Panc1 (cell line): ENCODE measurements at regions of chr6 and their contacts with region 1.

Region 1: DNA sequence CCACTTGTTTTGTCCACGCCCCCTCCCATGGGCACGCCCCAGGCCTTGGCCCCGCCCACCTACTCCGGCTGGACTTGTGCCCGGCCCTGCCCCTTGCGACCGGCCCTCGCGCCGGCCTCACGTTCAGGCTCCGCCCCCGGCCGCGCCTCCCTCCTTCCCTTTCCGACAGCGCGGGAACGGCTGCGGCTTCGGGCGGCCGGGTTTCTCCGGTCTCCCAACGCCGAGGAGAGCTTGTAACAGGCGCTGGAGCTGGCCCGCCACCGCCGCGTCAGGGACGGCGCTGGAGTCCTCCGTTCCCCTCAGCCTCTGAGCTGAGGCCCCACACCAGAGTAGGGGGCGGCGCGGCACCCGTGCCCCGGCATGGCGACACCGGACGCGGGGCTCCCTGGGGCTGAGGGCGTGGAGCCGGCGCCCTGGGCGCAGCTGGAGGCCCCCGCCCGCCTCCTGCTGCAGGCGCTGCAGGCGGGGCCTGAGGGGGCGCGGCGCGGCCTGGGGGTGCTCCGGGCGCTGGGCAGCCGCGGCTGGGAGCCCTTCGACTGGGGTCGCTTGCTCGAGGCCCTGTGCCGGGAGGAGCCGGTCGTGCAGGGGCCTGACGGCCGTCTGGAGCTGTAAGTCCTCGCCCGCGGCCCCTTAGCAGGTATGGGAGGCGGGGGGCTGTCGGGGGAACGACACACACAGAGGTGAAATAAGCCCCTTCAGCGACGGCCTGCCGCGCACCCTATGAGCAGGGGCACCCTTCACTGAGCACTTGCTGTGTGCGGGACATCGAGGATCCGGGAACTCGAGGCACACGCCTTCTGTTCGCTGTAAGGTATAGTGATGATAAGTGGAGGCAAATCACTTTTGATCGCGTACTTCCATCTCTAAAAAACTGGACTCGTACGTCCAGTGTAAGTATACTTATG is at the start of gene FANCE:
- DNase-seq: no peak
- ATAC-seq: peak; percentile 93
- H3K4me3 ChIP-seq: peak within 1 kb of the TSS; percentile 62 to 65
- H3K27ac ChIP-seq: peak within 1 kb of the TSS; percentile 51; the same call in 1 of the 2 replicates
- H3K4me1 ChIP-seq: peaks cover 18% of the 10 kb centered on the region
- H3K27me3 ChIP-seq: no peaks in the 10 kb centered on the region
- CTCF ChIP-seq: no peak
- total RNA-seq, gene FANCE: 4.3 TPM

Region 2: GRCh38 chr6:35008853-35009252 is 443.6 kb before region 1 on chr6:
- CTCF ChIA-PET with region 1: interaction called, 10 read pairs
- POLR2A ChIA-PET with region 1: no interaction called
- in situ Hi-C with region 1: no loop called
- intact Hi-C with region 1: no loop called
- DNase-seq: no peak
- ATAC-seq: no peak
- H3K4me3 ChIP-seq: no peak overlapping the region
- H3K27ac ChIP-seq: no peak overlapping the region
- H3K4me1 ChIP-seq: no peaks in the 10 kb centered on the region
- H3K27me3 ChIP-seq: no peaks in the 10 kb centered on the region
- CTCF ChIP-seq: no peak

Region 3: DNA sequence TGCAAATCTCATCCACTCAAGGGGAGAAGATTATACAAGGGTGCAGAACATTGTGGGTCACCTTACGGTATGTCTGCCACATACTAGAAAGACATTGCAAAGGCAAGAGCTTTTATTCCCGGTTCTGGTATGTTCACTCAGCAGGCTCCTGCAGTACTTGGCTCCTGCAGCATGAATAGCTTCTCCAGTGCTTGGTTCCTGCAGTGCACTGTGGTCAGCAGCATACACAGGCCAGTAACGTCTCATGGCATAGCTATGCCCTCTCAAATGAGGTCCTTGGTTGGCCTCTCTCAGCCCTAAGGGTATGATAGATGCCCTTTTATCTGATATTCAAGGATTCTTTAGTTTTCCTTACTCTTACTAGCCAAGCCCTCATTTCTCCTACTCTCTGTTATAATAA is 323.9 kb before region 1 on chr6:
- CTCF ChIA-PET with region 1: no interaction called
- POLR2A ChIA-PET with region 1: no interaction called
- in situ Hi-C with region 1: no loop called
- intact Hi-C with region 1: no loop called
- DNase-seq: no peak
- ATAC-seq: no peak
- H3K4me3 ChIP-seq: no peak overlapping the region
- H3K27ac ChIP-seq: no peak overlapping the region
- H3K4me1 ChIP-seq: no peaks in the 10 kb centered on the region
- H3K27me3 ChIP-seq: no peaks in the 10 kb centered on the region; the same call in 1 of the 2 replicates
- CTCF ChIP-seq: no peak

Region 4: DNA sequence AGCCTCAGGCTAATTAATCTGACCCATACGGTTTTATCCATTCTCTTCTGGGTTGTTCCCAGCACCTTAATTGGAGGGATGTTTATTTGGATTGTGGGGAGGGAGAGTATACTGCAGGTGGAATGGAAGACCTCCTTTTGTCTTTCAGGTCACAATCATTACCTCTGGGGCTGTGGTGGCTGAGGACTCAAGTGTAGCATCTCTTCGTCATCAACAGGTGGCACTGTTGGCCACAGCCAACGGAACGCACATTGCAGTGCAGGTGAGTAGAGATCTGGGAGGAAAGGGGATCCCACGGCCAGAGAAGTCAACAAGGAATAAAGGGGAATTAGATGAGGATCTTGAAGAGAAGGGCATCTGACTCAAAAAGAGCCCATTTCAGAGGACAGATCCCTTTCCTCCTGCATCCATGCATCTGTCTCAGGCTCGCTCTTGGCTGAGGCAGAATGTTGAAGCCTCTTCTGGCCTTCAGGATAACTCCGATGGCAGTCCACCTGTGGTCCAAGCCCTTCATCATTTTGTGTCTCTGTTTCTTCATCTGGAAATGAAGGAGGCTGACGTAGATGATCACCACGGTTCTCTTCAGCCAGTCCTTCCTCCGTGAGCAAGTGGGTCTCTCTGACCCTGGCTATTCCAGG is 158.0 kb before region 1 on chr6:
- CTCF ChIA-PET with region 1: interaction called, 5 read pairs
- POLR2A ChIA-PET with region 1: no interaction called
- in situ Hi-C with region 1: no loop called
- intact Hi-C with region 1: loop called (anchors 1 kb)
- DNase-seq: no peak
- ATAC-seq: peak; percentile 77
- H3K4me3 ChIP-seq: no peak overlapping the region
- H3K27ac ChIP-seq: no peak overlapping the region
- H3K4me1 ChIP-seq: no peaks in the 10 kb centered on the region
- H3K27me3 ChIP-seq: no peaks in the 10 kb centered on the region
- CTCF ChIP-seq: peak; percentile 88

Region 5: DNA sequence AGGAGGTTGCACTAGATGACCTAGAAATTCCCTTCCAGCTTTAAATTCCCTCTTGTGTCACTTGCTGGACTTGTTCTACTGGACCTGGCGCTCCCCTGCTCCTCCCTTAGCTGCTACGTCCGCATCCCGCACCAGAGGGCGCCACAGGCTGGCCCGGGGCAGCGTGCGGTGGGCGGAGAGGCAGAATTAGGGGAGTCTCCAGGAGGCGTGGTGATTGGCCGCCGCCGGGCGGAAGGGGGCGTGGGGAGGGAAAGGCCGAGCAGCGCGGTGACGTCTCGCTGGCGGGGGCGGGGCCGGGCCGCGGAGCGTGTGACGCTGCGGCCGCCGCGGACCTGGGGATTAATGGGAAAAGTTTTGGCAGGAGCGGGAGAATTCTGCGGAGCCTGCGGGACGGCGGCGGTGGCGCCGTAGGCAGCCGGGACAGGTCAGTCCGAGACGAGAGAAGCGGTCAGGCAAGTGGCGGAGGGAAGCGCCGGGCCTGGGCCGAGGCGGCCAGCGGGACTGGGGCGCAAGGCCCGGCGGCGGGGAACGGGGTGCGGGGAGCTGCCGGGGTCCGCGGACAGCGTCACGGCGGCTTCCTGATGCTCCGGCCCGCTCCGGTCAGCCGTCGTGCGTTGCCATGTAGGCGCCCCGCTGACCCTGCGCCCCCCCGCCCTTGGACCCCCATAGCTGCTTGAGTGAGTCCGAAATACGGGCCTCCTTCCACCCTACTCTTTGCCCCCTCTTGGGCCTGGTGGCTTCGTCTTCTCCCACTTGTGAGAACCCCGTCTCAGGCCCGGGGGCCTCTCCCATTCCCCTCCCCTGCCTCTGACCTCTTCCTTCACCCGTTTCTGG is 110.0 kb before region 1 on chr6 and contains the start of gene PPARD:
- CTCF ChIA-PET with region 1: interaction called, 34 read pairs
- POLR2A ChIA-PET with region 1: no interaction called
- in situ Hi-C with region 1: no loop called
- intact Hi-C with region 1: loop called (anchors 1 kb)
- DNase-seq: peak; percentile 73
- ATAC-seq: peak; percentile 100
- H3K4me3 ChIP-seq: peak within 1 kb of the TSS; percentile 83 to 89
- H3K27ac ChIP-seq: peak within 1 kb of the TSS; percentile 93
- H3K4me1 ChIP-seq: peaks cover 10% of the 10 kb centered on the region
- H3K27me3 ChIP-seq: no peaks in the 10 kb centered on the region
- CTCF ChIP-seq: peak; percentile 98
- total RNA-seq, gene PPARD: 14.4 TPM

Region 6: GRCh38 chr6:35354361-35355135 is 97.9 kb before region 1 on chr6:
- CTCF ChIA-PET with region 1: interaction called, 3 read pairs
- POLR2A ChIA-PET with region 1: interaction called, 21 read pairs
- in situ Hi-C with region 1: no loop called
- intact Hi-C with region 1: no loop called
- DNase-seq: no peak
- ATAC-seq: no peak
- H3K4me3 ChIP-seq: no peak overlapping the region
- H3K27ac ChIP-seq: no peak overlapping the region
- H3K4me1 ChIP-seq: no peaks in the 10 kb centered on the region
- H3K27me3 ChIP-seq: no peaks in the 10 kb centered on the region
- CTCF ChIP-seq: no peak

Region 7: GRCh38 chr6:35544523-35545313 is 92.3 kb after region 1 on chr6:
- CTCF ChIA-PET with region 1: interaction called, 12 read pairs
- POLR2A ChIA-PET with region 1: no interaction called
- in situ Hi-C with region 1: no loop called
- intact Hi-C with region 1: no loop called
- DNase-seq: no peak
- ATAC-seq: no peak
- H3K4me3 ChIP-seq: no peak overlapping the region
- H3K27ac ChIP-seq: no peak overlapping the region
- H3K4me1 ChIP-seq: no peaks in the 10 kb centered on the region
- H3K27me3 ChIP-seq: no peaks in the 10 kb centered on the region
- CTCF ChIP-seq: no peak

Region 8: GRCh38 chr6:35634316-35634715 is 181.9 kb after region 1 on chr6:
- CTCF ChIA-PET with region 1: no interaction called
- POLR2A ChIA-PET with region 1: no interaction called
- in situ Hi-C with region 1: no loop called
- intact Hi-C with region 1: no loop called
- DNase-seq: no peak
- ATAC-seq: no peak
- H3K4me3 ChIP-seq: no peak overlapping the region
- H3K27ac ChIP-seq: no peak overlapping the region
- H3K4me1 ChIP-seq: no peaks in the 10 kb centered on the region
- H3K27me3 ChIP-seq: no peaks in the 10 kb centered on the region
- CTCF ChIP-seq: no peak

Region 9: DNA sequence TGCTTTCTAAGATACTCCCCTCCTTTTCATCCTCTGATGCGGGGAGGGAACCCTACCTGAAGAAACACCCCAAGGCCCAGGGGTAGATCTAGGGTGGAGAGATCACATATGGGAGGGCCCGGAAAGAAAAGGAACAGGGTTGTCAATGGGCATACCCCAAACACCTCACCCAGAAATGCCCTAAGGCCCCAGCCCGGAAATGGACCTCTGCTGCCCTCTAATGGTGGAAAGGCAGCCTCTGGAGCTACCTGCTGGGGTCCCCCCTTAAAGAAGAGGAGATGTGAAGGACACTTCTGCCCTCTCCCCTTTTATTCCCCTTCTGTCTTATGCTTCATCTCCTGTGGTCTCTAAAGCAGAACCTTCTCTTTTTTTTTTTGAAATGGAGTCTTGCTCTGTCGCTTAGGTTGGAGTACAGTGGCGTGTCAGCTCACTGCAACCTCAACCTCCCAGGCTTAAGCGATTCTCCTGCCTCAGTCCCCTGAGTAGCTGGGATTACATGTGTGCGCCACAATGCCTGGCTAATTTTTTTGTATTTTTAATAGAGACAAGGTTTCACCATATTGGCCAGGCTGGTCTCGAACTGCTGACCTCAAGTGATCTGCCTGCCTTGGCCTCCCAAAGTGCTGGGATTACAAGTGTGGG is 283.9 kb after region 1 on chr6:
- CTCF ChIA-PET with region 1: no interaction called
- POLR2A ChIA-PET with region 1: interaction called, 10 read pairs
- in situ Hi-C with region 1: no loop called
- intact Hi-C with region 1: no loop called
- DNase-seq: no peak
- ATAC-seq: peak; percentile 54
- H3K4me3 ChIP-seq: no peak overlapping the region
- H3K27ac ChIP-seq: no peak overlapping the region
- H3K4me1 ChIP-seq: peaks cover 5% of the 10 kb centered on the region; the same call in 1 of the 2 replicates
- H3K27me3 ChIP-seq: no peaks in the 10 kb centered on the region
- CTCF ChIP-seq: peak; percentile 94